ENCODE measurements at regions of chrX and their contacts with region 1.

Region 1: DNA sequence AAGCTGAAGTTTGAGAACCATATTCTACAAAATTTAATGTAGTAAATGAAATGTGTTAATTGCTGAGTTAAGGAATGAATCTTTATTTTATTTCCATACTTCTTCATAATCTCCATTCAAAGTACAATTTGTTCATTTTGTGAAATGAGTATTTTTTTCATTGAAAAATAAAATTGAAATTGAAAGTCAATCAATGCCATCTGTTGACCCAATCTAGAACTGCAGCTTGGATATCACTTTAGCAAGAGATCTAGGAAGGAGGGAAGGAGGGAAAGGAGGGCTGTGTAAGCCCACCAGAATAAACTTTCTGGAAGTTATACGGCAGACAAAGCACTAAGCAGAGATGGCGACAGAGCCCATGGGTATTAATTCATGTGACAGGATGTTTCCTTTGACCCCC is 128.4 kb downstream of the ZMAT1 start:
- DNase-seq: peak; percentile 52

Region 2: DNA sequence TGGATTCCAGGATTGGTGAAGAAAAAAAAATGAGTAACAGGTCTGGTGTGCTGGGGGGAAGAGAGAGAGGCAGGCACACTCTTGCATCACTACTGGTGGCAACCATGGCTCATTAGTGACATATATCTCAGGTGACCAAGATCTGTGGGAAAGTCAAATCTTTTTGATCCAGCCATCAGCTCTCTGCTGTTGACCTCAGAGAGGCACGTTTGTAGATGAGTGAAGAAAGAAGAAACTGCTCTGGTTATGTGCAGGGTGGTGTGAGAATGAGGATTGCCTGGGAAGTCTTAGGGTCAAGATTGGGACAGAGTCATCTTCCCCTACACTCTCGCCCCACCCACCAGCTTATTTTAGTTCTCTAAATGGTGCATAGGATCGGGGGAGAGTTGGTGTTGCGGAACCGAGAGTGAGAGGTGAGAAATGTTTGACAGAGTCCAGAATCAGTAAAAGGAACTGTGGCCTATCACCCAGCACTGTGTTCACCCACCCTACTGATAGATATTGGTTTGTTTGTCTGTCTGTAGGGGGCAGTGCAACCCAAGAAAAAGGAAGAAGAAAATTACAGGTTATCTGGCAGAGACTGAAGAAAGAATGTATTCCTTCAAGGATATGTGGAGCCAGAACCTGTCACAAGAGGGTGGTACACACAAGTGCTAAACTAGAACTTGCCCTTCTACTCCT is 207.6 kb before region 1 on chrX:
- in situ Hi-C with region 1: loop called (anchors 25 kb)
- DNase-seq: peak; percentile 68